ENCODE measurements at regions of chr1 and their contacts with region 1.

Region 1: GRCh38 chr1:66242646-66243547 is 291.1 kb upstream of the SGIP1 start:
- DNase-seq: peak; percentile 84
- H3K4me3 Mint-ChIP-seq: no peak overlapping the region
- H3K27ac Mint-ChIP-seq: no peak overlapping the region
- H3K4me1 Mint-ChIP-seq: no peaks in the 10 kb centered on the region
- H3K27me3 Mint-ChIP-seq: peaks cover 6% of the 10 kb centered on the region

Region 2: GRCh38 chr1:65393347-65393746 is 849.5 kb before region 1 on chr1:
- CTCF ChIA-PET with region 1: no interaction called
- POLR2A ChIA-PET with region 1: no interaction called
- intact Hi-C with region 1: loop called (anchors 10 kb)
- DNase-seq: peak; percentile 57
- H3K4me3 Mint-ChIP-seq: no peak overlapping the region
- H3K27ac Mint-ChIP-seq: peak overlapping the region; percentile 69
- H3K4me1 Mint-ChIP-seq: peaks cover 57% of the 10 kb centered on the region
- H3K27me3 Mint-ChIP-seq: no peaks in the 10 kb centered on the region

Region 3: DNA sequence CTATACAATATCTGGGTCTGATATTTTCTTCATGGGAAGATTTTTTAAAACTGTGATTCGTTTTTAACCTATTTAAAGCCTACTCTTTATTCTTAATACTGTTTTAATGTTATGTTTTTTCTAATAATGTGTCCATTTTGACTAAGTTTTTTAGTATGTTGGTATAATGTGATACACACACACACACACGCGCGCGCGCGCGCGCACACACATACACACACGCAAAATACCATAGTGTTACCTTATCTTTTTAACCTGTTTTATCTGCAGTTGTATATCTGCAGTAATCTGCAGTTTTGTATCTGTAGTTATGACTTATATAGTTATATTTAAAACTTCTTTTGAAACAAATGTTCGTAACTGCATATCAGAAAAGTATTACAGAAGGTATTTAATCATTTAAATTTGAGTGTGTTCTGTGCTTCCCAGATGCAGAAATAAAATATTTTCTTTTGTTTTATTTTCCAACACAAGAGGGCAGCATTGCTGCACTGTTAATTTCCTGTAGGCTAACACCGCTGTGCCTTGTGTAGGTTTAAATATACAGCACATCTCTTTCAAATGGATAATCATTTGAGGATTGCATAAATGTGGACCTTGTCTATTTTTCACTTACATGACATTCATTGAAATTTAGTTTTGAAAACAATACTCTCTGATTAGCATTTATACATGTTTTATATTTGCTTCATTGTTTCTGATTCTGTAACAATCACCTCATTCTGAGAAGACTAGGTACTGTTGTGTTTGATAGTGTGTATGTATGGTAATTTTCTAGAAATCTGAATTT is 284.1 kb before region 1 on chr1:
- CTCF ChIA-PET with region 1: interaction called, 208 read pairs
- POLR2A ChIA-PET with region 1: interaction called, 3 read pairs
- intact Hi-C with region 1: loop called (anchors 1 kb)
- DNase-seq: peak; percentile 13
- H3K4me3 Mint-ChIP-seq: no peak overlapping the region
- H3K27ac Mint-ChIP-seq: no peak overlapping the region
- H3K4me1 Mint-ChIP-seq: no peaks in the 10 kb centered on the region
- H3K27me3 Mint-ChIP-seq: peaks cover 2% of the 10 kb centered on the region

Region 4: GRCh38 chr1:66223681-66224080 is 19.2 kb before region 1 on chr1:
- CTCF ChIA-PET with region 1: interaction called, 16 read pairs
- POLR2A ChIA-PET with region 1: no interaction called
- intact Hi-C with region 1: no loop called
- DNase-seq: no peak
- H3K4me3 Mint-ChIP-seq: no peak overlapping the region
- H3K27ac Mint-ChIP-seq: no peak overlapping the region
- H3K4me1 Mint-ChIP-seq: no peaks in the 10 kb centered on the region
- H3K27me3 Mint-ChIP-seq: peaks cover 5% of the 10 kb centered on the region

Region 5: GRCh38 chr1:66282343-66282852 is 39.5 kb after region 1 on chr1:
- CTCF ChIA-PET with region 1: interaction called, 15 read pairs
- POLR2A ChIA-PET with region 1: interaction called, 9 read pairs
- intact Hi-C with region 1: loop called (anchors 1 kb)
- DNase-seq: peak; percentile 80
- H3K4me3 Mint-ChIP-seq: no peak overlapping the region
- H3K27ac Mint-ChIP-seq: peak overlapping the region; percentile 76
- H3K4me1 Mint-ChIP-seq: peaks cover 87% of the 10 kb centered on the region
- H3K27me3 Mint-ChIP-seq: no peaks in the 10 kb centered on the region

Region 6: GRCh38 chr1:66374561-66375111 is 131.7 kb after region 1 on chr1:
- CTCF ChIA-PET with region 1: interaction called, 15 read pairs
- POLR2A ChIA-PET with region 1: interaction called, 11 read pairs
- intact Hi-C with region 1: loop called (anchors 1 kb)
- DNase-seq: peak; percentile 71
- H3K4me3 Mint-ChIP-seq: peak overlapping the region; percentile 64
- H3K27ac Mint-ChIP-seq: peak overlapping the region; percentile 99
- H3K4me1 Mint-ChIP-seq: peaks cover 76% of the 10 kb centered on the region
- H3K27me3 Mint-ChIP-seq: no peaks in the 10 kb centered on the region

Region 7: DNA sequence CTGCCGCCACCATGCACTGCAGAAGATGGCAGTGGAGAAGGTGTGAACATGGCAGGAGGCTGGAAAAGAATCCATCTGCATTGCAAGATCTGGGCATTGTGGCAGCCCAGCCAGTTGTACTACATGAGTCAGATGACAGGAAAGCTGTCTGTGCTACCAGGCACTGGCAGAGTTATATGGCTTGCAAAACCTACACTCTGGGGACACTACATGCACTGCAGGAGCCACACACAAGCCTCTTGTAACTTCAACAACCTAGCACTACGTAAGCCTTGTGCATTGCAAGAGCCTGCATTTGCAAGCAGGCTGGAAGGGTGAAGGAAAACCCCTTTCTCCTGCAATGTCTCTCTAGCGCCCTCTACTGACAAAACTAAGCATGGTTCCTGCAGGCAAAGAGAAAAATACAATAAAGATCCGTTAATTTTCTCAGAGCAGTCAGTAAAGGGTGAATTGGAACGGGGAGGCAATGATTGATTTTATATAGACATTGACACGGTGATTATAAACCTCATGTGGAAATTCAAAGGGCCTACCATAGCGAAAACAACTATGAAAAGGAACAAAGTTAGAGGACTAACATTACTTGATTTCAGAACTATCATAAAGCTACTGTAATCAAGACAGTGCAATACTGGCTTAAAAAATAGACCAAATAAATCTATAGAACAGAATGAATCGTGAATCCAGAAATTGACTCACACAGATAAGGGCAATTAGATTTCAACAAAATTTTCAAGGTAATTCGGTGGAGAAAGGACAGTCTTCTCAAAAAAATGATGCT is 483.2 kb after region 1 on chr1:
- CTCF ChIA-PET with region 1: interaction called, 4 read pairs
- POLR2A ChIA-PET with region 1: no interaction called
- intact Hi-C with region 1: loop called (anchors 5 kb)
- DNase-seq: peak; percentile 61
- H3K4me3 Mint-ChIP-seq: no peak overlapping the region
- H3K27ac Mint-ChIP-seq: no peak overlapping the region
- H3K4me1 Mint-ChIP-seq: peaks cover 10% of the 10 kb centered on the region
- H3K27me3 Mint-ChIP-seq: peaks cover 8% of the 10 kb centered on the region

Measured in activated CD4-positive, alpha-beta memory T cell treated with anti-CD3 and anti-CD28 coated beads for 36 hours (primary cell).